ENCODE measurements at regions of chr17 and their contacts with region 1.

Region 1: DNA sequence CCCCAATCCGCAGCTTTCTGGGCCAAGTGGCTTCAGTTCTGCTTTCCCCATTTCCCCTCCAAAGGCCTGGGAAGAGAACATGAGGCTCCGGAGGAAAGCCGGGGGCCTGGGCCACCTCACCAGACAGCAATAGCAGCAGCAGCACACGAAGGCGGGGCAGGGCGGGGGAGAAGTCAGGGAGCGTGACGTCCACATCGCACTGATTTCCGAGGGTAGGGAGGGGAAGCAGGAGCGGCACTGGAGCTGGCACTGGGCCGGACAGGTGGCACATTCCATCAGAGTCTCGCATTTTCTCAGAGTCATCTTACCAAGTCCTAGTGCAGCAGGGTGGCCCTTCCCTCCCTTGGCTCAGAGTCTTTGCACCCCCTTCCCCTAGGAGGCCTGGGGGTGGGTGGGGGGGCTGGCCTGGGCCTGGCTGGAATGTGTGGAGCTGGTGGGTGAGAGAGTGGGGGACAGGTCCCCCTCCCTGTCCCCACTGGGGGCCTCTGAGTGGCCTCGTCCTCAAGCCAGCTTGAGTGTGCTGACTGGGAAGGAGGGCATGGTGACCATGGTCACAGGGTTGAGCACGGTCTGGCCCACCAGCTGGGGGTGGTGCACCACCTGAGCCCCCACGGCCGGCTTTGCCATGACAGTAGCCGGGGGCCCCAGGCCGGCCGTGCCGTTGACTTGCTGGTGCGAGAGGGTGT is 14.3 kb downstream of the MNT start:
- DNase-seq: peak in 1 of 5 donors; percentile 49
- ATAC-seq: no peak
- H3K4me3 ChIP-seq: no peak overlapping the region
- H3K27ac ChIP-seq: no peak overlapping the region
- H3K4me1 ChIP-seq: peaks cover 0 to 53% (median 26%) of the 10 kb centered on the region in 12 donors
- H3K27me3 ChIP-seq: no peaks in the 10 kb centered on the region
- CTCF ChIP-seq: no peak
- POLR2A ChIP-seq: no peak

Region 2: DNA sequence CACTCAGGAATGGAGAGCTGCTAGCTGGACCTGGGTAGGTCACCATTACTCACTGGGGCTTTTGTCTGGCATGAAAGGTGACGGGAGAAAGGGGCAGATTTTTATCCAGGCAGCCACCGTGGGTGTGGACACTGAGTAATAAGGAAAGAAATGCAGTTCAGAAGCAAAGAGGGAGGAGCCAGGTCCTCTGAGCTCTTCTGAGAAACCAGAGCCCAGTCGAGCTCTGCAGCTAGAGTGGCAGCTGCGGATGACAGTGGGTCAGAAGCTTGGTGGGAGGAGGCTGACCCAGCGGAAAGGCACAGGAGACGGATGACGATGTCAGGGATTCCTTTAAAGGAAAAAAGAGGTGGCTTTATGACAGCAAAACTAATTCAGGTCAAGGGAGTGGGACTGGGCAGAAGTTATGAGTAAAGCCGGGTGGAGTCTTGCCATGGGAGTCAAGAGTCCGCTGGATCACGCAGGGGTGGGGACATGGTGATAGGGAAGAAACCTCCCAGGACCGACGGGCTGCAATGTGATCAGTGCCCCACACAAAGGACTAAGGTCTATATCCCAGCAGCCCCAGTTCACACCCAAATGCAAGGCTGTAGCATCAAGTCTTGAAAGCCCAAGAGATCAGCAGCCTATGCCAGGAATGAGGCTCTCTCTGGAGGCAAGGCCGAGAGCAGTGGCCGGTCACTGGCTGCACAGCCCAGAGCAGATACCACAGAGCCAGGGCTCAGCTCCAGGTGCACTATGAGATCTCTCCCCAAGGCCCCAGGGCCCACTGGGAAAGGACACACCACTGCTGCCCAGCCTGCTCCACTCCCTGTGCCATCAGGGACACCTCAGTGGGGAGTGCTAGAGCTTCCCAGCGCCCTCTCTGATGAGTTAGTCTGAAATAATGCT is 20.6 kb after region 1 on chr17:
- intact Hi-C with region 1: loop called in 2 of 10 experiments (anchors 2 kb)
- DNase-seq: peak in 4 of 5 donors; percentile 64 to 81 (median 70)
- ATAC-seq: peak; percentile 31 to 78 (median 72)
- H3K4me3 ChIP-seq: no peak overlapping the region
- H3K27ac ChIP-seq: peak overlapping the region in 11 of 12 donors; percentile 65 to 99 (median 73)
- H3K4me1 ChIP-seq: peaks cover 0 to 59% (median 47%) of the 10 kb centered on the region in 12 donors
- H3K27me3 ChIP-seq: no peaks in the 10 kb centered on the region
- CTCF ChIP-seq: no peak
- POLR2A ChIP-seq: peak in 1 of 2 donors; percentile 19

Region 3: GRCh38 chr17:2416010-2416734 is 29.6 kb after region 1 on chr17:
- intact Hi-C with region 1: loop called (anchors 1 to 2 kb)
- DNase-seq: peak; percentile 85 to 92 (median 87)
- ATAC-seq: peak; percentile 49 to 77 (median 76)
- H3K4me3 ChIP-seq: no peak overlapping the region
- H3K27ac ChIP-seq: peak overlapping the region in 3 of 12 donors; percentile 13 to 63 (median 15)
- H3K4me1 ChIP-seq: peaks cover 0 to 40% (median 16%) of the 10 kb centered on the region in 12 donors
- H3K27me3 ChIP-seq: no peaks in the 10 kb centered on the region
- CTCF ChIP-seq: peak; percentile 94 to 100 (median 98)
- POLR2A ChIP-seq: no peak

Region 4: DNA sequence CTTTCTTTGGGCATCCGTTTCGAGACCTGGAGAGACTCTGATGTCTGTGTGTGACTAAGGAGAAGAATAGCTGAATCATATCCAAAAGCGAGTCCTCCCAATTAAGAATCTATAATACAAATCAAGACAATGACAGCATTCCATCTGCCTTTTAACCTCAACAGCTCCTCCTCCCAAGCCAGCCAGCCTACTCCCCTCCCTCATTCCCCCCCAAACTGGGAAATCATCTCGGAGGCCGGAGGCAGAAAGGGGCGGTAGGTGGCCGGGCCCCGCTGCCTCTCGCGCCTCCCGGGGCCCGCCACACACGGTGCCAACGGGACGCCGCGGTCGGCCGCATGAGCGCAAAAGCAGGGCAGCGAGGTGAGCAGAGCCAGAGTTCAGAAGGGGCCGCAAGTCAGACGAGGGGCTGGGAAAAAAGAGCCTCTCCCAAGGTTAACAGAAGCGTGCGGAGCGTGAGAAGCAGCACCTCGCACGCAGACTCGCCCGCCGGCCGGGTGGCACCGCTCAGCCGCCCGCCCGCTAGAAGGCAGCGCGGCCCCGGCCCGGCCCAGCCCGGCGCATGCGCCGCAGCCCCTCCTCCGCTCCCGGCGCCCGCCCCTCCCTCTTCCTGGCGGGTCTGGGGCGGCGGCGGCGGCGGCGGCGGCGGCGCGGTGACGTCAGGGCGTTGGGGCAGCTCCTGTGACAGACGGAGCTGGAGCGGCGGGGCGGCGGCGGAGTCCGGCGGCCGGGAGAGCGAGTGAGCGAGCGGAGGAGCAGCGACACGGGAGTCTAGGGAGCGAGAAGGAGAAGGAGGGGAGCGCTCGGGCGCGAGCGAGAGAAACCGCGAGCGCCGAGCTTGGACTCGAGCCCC is 206.7 kb after region 1 on chr17 and contains the start of gene PAFAH1B1:
- intact Hi-C with region 1: no loop called
- DNase-seq: peak; percentile 94 to 97 (median 96)
- ATAC-seq: peak; percentile 76 to 96 (median 92)
- H3K4me3 ChIP-seq: peak within 1 kb of the TSS; percentile 75 to 100 (median 95)
- H3K27ac ChIP-seq: peak within 1 kb of the TSS; percentile 95 to 100 (median 99)
- H3K4me1 ChIP-seq: peaks cover 4 to 47% (median 38%) of the 10 kb centered on the region in 12 donors
- H3K27me3 ChIP-seq: no peaks in the 10 kb centered on the region
- CTCF ChIP-seq: peak in 5 of 12 donors; percentile 12 to 48 (median 45)
- POLR2A ChIP-seq: peak in 1 of 2 donors; percentile 81
- total RNA-seq, gene PAFAH1B1: 80.5 to 154 (median 121) TPM

Region 5: DNA sequence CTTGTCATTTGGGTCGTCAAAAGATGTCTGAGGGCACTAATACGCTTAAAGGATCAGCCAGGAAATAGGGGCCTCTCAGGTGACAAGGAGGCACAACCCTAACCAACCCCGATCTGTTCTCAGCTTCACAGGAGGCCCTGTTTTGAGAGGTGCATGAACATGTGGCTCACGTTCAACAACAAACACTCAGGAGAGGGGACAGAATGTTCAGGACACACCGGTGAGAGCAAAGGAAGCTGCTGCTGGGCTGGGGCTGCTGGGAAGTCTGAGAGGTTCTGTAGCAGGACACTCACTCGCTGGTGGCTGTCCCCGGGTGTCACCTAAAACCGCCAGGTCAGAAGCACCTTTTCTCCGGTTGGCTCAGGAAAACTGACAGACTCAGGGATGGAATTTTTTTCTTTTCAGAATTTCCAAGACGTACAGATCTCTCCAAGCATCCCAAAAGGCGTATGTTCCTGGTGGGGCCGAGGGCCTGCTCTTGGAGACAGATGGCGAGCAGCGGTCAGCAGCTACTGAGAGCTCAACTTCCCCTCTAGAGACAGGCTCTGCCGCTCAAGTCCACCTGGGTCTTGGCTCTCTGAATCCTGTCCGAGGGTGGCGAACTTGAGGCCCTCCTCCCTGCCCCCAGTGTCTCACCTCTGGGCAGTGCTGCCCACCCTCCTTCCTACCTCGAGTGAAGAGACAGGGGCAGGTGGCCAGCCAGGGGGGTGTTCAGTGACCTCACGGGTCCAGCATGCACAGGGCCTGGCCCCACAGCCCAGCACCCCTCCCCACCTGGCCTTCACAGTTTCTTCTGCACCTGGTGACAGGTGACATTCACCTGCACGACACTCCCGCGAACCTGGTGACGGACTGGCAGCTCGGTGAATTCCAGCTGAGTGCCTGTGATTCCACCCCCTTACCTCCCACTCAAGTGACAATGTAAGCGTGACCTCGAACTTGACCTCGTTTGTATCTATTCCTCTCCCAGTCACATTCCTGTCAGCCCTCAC is 302.1 kb after region 1 on chr17:
- intact Hi-C with region 1: loop called in 1 of 10 experiments (anchors 10 kb)
- DNase-seq: peak in 3 of 5 donors; percentile 16 to 64 (median 33)
- ATAC-seq: peak; percentile 19 to 42 (median 24)
- H3K4me3 ChIP-seq: no peak overlapping the region
- H3K27ac ChIP-seq: peak overlapping the region in 10 of 12 donors; percentile 5 to 81 (median 28)
- H3K4me1 ChIP-seq: peaks cover 0 to 52% (median 24%) of the 10 kb centered on the region in 12 donors
- H3K27me3 ChIP-seq: no peaks in the 10 kb centered on the region
- CTCF ChIP-seq: no peak
- POLR2A ChIP-seq: no peak